ENCODE measurements at regions of chr4 and their contacts with region 1.

Region 1: DNA sequence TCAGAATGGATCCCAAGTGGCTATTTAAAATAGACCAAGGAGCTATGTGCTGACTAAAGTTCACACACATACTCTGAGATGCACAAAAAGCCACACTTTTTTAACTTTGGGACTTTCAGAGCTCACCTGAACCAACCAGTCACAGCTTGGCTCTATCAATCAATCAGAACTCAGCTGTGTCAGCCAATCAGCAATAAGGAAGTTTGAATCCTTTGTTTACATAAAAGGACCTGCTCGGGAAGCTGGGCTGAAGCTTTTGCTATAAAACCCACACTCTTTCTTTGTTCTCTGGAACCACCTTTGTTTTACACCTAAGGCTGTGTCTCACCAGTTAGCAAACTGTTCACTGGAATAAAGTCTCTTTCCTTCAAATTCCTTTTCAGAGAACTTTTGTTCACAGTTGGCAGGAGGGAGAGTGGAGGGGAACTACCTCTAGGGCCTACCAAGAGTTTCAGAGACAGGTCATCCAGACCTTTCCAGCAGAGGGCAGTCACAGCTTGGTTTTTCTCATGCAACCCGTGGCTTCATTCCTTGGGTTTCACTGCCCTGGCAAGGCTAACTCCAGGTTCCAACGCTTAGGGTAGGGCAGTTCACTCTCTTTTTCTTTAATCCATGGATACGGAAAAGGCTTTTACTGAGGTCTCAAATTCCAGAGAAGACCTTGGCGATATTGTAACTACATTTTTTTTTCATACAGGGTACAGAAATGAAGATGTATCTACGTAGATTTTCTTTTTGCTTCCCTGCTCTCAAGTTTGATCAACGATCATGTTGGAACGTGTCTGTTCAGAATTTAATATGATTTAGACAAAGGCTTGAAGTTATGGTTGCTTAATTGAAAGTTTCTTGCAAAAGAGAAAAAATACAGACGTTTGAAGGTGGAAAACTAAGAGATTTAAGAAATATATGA is 80.7 kb downstream of the GPRIN3 start:
- DNase-seq: peak; percentile 90 to 95
- H3K4me3 ChIP-seq: no peak overlapping the region
- H3K27ac ChIP-seq: peak overlapping the region in 1 of 5 donors; percentile 27
- H3K4me1 ChIP-seq: peaks cover 0 to 6% (median 0%) of the 10 kb centered on the region in 4 donors
- H3K27me3 ChIP-seq: no peaks in the 10 kb centered on the region
- CTCF ChIP-seq: peak in 5 of 7 experiments; percentile 62 to 92 (median 78)
- EP300 ChIP-seq: no peak
- POLR2A ChIP-seq: no peak

Region 2: DNA sequence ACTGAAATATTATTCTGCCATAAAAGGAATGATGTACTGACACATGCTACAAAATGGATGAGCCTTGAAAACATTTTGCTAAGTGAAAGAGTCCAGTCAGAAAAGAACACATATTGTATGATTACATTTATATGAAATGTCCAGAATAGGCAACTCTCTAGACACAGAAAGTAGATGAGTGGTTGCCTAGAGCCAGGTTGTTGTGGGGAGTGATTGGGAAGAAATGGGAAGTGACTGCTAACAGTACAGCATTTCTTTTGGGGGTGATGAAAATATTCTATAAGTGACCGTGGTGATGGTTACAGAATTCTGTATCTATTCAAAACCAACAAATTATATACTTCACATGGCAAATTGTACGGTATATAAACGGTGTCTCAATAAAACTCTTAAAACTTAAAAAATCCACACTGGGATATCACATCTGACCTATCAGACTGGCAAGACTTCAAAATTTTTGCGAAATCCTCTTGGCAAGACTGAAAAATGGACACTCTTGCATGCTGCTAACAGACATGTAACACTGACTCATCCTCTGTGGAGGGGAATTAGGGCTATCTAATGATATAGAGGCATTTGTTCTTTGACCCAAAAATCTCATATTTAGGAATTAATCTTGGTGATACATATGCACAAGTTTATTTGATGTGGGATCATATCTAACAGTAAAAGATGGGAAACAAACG is 241.7 kb before region 1 on chr4:
- intact Hi-C with region 1: no loop called
- DNase-seq: no peak
- H3K4me3 ChIP-seq: no peak overlapping the region
- H3K27ac ChIP-seq: no peak overlapping the region
- H3K4me1 ChIP-seq: peaks cover 0 to 4% (median 1%) of the 10 kb centered on the region in 4 donors
- H3K27me3 ChIP-seq: no peaks in the 10 kb centered on the region
- CTCF ChIP-seq: no peak
- EP300 ChIP-seq: no peak
- POLR2A ChIP-seq: no peak

Region 3: GRCh38 chr4:89434364-89434988 is 207.6 kb after region 1 on chr4:
- intact Hi-C with region 1: loop called (anchors 5 kb)
- DNase-seq: peak in 1 of 2 donors; percentile 75
- H3K4me3 ChIP-seq: no peak overlapping the region
- H3K27ac ChIP-seq: no peak overlapping the region
- H3K4me1 ChIP-seq: no peaks in the 10 kb centered on the region
- H3K27me3 ChIP-seq: no peaks in the 10 kb centered on the region
- CTCF ChIP-seq: peak in 5 of 7 experiments; percentile 51 to 78 (median 71)
- EP300 ChIP-seq: no peak
- POLR2A ChIP-seq: no peak

Measured in stomach (tissue), 19 donors.